Heart right ventricle (tissue), 16 donors: ENCODE measurements at regions of chr3 and their contacts with region 1.

Region 1: GRCh38 chr3:134427400-134428145 is 53.3 kb upstream of the AMOTL2 start:
- DNase-seq: no peak
- ATAC-seq: peak in 4 of 8 donors; percentile 33 to 91 (median 51)
- H3K4me3 ChIP-seq: no peak overlapping the region
- H3K27ac ChIP-seq: peak overlapping the region in 1 of 10 donors; percentile 71
- H3K4me1 ChIP-seq: peaks cover 0 to 14% (median 0%) of the 10 kb centered on the region in 9 donors
- H3K27me3 ChIP-seq: no peaks in the 10 kb centered on the region
- CTCF ChIP-seq: no peak

Region 2: DNA sequence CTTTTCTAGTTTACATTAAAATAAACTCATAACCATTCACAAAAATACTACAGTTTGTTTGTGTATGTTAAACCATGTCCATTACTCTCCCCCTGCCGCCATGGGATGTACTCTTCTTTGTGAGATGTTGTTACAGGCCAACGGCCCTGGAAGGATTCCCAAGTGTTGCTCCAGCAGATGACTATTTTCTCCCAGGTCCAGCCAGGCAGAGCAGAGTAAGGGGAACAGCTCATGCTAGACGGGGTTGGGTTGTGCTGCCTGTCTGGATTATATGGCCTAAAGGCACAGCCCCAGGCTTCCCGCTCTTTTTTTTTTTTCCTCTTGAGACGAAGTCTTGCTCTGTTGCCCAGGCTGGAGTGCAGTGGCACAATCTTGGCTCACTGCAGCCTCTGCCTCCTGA is 373.3 kb before region 1 on chr3:
- intact Hi-C with region 1: loop called in 1 of 10 experiments (anchors 5 kb)
- DNase-seq: no peak
- ATAC-seq: no peak
- H3K4me3 ChIP-seq: no peak overlapping the region
- H3K27ac ChIP-seq: no peak overlapping the region
- H3K4me1 ChIP-seq: peaks cover 0 to 10% (median 0%) of the 10 kb centered on the region in 9 donors
- H3K27me3 ChIP-seq: no peaks in the 10 kb centered on the region
- CTCF ChIP-seq: no peak

Region 3: GRCh38 chr3:134718726-134719125 is 291.2 kb after region 1 on chr3:
- intact Hi-C with region 1: no loop called
- DNase-seq: no peak
- ATAC-seq: no peak
- H3K4me3 ChIP-seq: no peak overlapping the region
- H3K27ac ChIP-seq: no peak overlapping the region
- H3K4me1 ChIP-seq: no peaks in the 10 kb centered on the region
- H3K27me3 ChIP-seq: no peaks in the 10 kb centered on the region
- CTCF ChIP-seq: no peak